B cell (primary cell): ENCODE measurements at regions of chr22 and their contacts with region 1.

Region 1: GRCh38 chr22:37608477-37609239 is at the start of gene GGA1:
- DNase-seq: peak; percentile 99
- ATAC-seq: peak; percentile 75
- H3K4me3 ChIP-seq: peak within 1 kb of the TSS; percentile 65 to 89 (median 77)
- H3K4me3 Mint-ChIP-seq: peak within 1 kb of the TSS; percentile 96
- H3K27ac ChIP-seq: peak within 1 kb of the TSS; percentile 94 to 99
- H3K27ac Mint-ChIP-seq: peak within 1 kb of the TSS; percentile 98
- H3K4me1 ChIP-seq: peaks cover 26 to 36% of the 10 kb centered on the region in 2 donors
- H3K4me1 Mint-ChIP-seq: peaks cover 33% of the 10 kb centered on the region
- H3K27me3 ChIP-seq: peaks cover 0 to 2% (median 0%) of the 10 kb centered on the region in 4 experiments
- H3K27me3 Mint-ChIP-seq: peaks cover 10% of the 10 kb centered on the region
- CTCF ChIP-seq: no peak
- total RNA-seq, gene GGA1: 146 and 154 TPM in 2 replicates

Region 2: DNA sequence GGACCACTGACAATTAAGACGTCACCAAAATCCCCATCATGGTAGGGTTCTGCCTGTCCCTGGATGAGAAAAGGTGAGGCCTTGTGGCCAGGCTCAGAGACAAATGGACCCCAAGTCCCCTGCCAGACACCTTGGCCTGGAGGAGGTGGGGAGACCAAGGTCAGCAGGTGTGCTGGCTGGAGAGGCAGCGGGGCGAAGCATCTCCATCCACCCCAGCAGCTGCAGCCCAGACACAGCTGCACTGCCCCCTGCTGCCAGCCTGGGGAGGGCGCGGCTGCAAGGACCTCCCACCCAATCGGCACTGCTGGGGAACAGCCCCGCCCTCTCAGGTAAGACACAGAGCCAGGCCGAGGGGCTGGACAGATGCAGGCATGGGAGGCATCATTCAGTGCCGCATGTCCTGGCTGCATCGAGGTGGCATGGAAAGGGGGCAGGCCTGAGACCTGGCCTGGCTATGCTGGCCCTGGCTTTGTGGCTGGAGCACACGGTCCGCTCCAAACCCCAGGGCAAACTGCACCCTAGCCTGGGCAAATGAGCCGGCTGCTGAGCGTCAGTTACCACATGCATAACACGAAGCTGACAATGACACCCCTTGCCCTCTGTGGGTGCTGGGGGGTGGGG is 110.3 kb before region 1 on chr22:
- CTCF ChIA-PET with region 1: no interaction called
- POLR2A ChIA-PET with region 1: interaction called, 13 read pairs
- intact Hi-C with region 1: no loop called
- DNase-seq: peak; percentile 78
- ATAC-seq: peak; percentile 97
- H3K4me3 ChIP-seq: no peak overlapping the region
- H3K4me3 Mint-ChIP-seq: no peak overlapping the region
- H3K27ac ChIP-seq: no peak overlapping the region
- H3K27ac Mint-ChIP-seq: no peak overlapping the region
- H3K4me1 ChIP-seq: peaks cover 0 to 7% of the 10 kb centered on the region in 2 donors
- H3K4me1 Mint-ChIP-seq: no peaks in the 10 kb centered on the region
- H3K27me3 ChIP-seq: peaks cover 0 to 29% (median 1%) of the 10 kb centered on the region in 4 experiments
- H3K27me3 Mint-ChIP-seq: peaks cover 20% of the 10 kb centered on the region
- CTCF ChIP-seq: peak; percentile 76

Region 3: DNA sequence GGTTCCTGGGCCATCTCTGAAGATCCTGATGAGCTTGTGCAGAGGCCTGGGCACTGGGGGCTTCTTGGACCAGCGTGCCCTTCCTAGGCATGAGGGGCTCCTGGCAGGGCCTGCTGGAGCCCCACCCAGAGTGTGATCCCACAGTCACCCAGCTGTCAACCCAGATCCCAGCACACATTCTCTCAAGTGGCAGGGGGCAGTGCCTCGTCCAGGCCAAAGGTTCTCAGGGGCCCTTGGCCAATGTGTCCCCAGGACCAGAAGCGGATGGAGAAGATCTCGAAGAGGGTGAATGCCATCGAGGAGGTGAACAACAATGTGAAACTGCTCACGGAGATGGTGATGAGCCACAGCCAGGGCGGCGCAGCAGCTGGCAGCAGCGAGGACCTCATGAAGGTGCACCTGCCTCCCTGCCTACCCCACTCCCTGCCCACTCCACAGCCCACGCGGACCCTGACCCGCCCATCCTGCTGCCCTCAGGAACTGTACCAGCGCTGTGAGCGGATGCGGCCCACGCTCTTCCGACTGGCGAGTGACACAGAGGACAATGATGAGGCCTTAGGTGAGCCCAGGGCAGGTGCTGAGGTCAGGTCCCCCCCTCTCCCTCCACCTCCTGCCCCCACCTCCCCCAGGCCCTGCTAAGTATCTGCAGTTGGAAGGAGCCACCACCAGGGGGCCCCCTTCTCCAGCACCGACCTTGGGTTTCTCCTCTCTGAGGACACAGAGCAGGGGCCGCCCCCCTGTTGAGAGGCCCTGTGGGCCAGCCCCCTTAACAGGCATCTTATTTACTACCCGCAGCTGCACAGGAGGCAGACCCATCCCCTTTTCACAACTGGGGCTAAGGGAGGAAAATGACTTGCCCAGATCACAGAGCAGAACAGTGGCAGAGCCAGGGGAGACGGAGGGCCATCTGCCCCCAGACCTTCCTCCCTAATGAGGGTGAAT is 14.7 kb after region 1 on chr22:
- CTCF ChIA-PET with region 1: interaction called, 620 read pairs
- POLR2A ChIA-PET with region 1: interaction called, 27 read pairs
- intact Hi-C with region 1: no loop called
- DNase-seq: peak; percentile 83
- ATAC-seq: peak; percentile 83
- H3K4me3 ChIP-seq: no peak overlapping the region
- H3K4me3 Mint-ChIP-seq: peak overlapping the region; percentile 61
- H3K27ac ChIP-seq: peak overlapping the region; percentile 47 to 52
- H3K27ac Mint-ChIP-seq: peak overlapping the region; percentile 92
- H3K4me1 ChIP-seq: peaks cover 40 to 69% of the 10 kb centered on the region in 2 donors
- H3K4me1 Mint-ChIP-seq: peaks cover 60% of the 10 kb centered on the region
- H3K27me3 ChIP-seq: no peaks in the 10 kb centered on the region
- H3K27me3 Mint-ChIP-seq: no peaks in the 10 kb centered on the region
- CTCF ChIP-seq: peak; percentile 86

Region 4: DNA sequence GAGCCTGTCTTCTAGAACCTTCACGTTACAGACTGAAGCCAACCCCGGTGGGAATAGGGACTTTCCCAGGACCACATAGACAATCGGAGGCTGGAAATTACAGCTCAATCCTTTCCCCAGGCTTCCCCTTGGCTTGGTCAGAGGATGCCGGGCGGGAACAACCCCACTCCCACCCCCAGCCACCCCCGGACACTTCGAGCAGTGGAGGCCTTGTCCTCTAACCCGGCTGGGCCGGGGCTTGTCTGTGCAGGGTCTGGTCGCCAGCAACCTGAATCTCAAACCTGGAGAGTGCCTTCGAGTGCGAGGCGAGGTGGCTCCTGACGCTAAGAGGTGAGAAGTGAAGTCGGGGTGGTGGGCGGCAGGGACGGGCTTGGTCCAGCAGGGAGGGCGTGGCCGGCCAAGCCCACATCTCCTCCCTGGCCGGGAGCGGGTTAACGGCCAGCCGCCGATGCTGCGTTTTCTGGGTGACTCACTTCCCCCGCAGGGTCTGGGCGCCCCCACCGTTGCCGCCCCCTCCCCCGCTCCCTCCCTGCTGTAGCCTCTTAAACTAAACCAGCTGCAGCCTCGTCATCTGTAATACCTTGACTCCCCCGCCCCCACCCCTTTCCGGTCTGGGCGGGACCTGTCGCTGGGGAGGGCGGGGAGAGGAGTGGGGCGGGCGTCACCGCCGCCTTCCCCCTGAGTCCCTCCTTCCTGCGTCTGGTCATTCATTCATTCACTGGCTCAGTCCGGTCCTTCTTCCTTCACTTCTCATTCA is 68.3 kb after region 1 on chr22:
- CTCF ChIA-PET with region 1: interaction called, 67 read pairs
- POLR2A ChIA-PET with region 1: interaction called, 15 read pairs
- intact Hi-C with region 1: loop called (anchors 1 kb)
- DNase-seq: peak; percentile 95
- ATAC-seq: peak; percentile 83
- H3K4me3 ChIP-seq: peak overlapping the region; percentile 73 to 92 (median 81)
- H3K4me3 Mint-ChIP-seq: peak overlapping the region; percentile 96
- H3K27ac ChIP-seq: peak overlapping the region; percentile 98
- H3K27ac Mint-ChIP-seq: peak overlapping the region; percentile 97
- H3K4me1 ChIP-seq: peaks cover 34 to 63% of the 10 kb centered on the region in 2 donors
- H3K4me1 Mint-ChIP-seq: peaks cover 56% of the 10 kb centered on the region
- H3K27me3 ChIP-seq: no peaks in the 10 kb centered on the region
- H3K27me3 Mint-ChIP-seq: no peaks in the 10 kb centered on the region
- CTCF ChIP-seq: no peak

Region 5: DNA sequence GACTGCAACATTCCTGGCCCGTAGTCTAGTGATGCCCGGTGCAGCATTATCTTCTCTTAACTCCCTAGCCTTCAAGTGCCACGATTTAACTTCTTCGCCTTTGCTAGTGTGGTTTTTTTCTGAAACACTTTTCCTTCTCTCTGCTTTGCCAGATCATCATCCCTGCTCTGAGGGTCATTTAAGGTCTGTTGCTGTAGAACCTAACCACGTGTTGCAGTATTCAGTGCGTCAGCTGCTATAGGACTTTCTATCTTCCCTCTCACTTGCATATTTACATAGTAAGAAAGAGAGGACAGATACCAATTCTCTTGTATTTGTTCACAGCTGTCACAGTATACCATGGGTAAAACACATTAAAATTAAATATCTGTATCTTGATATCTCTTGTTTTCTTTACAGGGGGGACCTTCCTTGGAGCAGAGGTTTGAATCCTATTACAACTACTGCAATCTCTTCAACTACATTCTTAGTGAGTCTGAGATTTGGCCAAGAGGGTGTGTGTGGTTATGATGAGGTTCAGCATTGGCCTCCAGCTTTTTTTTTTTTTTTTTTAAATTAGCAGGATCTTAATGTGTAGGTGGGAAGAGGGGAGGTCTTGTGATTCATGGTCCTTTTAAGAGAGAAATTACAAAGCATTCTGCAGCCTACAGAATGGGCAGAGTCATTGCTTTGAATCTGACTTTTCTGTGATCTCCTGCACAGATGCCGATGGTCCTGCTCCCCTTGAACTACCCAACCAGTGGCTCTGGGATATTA is 254.1 kb after region 1 on chr22:
- CTCF ChIA-PET with region 1: interaction called, 21 read pairs
- POLR2A ChIA-PET with region 1: interaction called, 3 read pairs
- intact Hi-C with region 1: loop called (anchors 1 kb)
- DNase-seq: no peak
- ATAC-seq: no peak
- H3K4me3 ChIP-seq: no peak overlapping the region
- H3K4me3 Mint-ChIP-seq: no peak overlapping the region
- H3K27ac ChIP-seq: no peak overlapping the region
- H3K27ac Mint-ChIP-seq: no peak overlapping the region
- H3K4me1 ChIP-seq: no peaks in the 10 kb centered on the region
- H3K4me1 Mint-ChIP-seq: no peaks in the 10 kb centered on the region
- H3K27me3 ChIP-seq: no peaks in the 10 kb centered on the region
- H3K27me3 Mint-ChIP-seq: no peaks in the 10 kb centered on the region
- CTCF ChIP-seq: no peak